Naive thymus-derived CD4-positive, alpha-beta T cell (primary cell): ENCODE measurements at regions of chr1 and their contacts with region 1.

Region 1: GRCh38 chr1:172719694-172720138 is 60.8 kb downstream of the FASLG start:
- DNase-seq: peak in 7 of 9 donors; percentile 29 to 61 (median 48)
- ATAC-seq: peak; percentile 87
- H3K4me3 ChIP-seq: no peak overlapping the region
- H3K4me3 Mint-ChIP-seq: no peak overlapping the region
- H3K27ac ChIP-seq: no peak overlapping the region
- H3K27ac Mint-ChIP-seq: peak overlapping the region in 4 of 9 donors; percentile 0 to 22 (median 9)
- H3K4me1 ChIP-seq: peaks cover 0 to 13% of the 10 kb centered on the region in 2 donors
- H3K4me1 Mint-ChIP-seq: peaks cover 21 to 50% (median 32%) of the 10 kb centered on the region in 7 donors
- H3K27me3 ChIP-seq: no peaks in the 10 kb centered on the region
- H3K27me3 Mint-ChIP-seq: peaks cover 0 to 8% (median 0%) of the 10 kb centered on the region in 5 donors

Region 2: GRCh38 chr1:171344473-171344820 is 1375.3 kb before region 1 on chr1:
- CTCF ChIA-PET with region 1: no interaction called
- POLR2A ChIA-PET with region 1: no interaction called
- intact Hi-C with region 1: no loop called
- DNase-seq: no peak
- ATAC-seq: no peak
- H3K4me3 ChIP-seq: no peak overlapping the region
- H3K4me3 Mint-ChIP-seq: no peak overlapping the region
- H3K27ac ChIP-seq: no peak overlapping the region
- H3K27ac Mint-ChIP-seq: no peak overlapping the region
- H3K4me1 ChIP-seq: no peaks in the 10 kb centered on the region
- H3K4me1 Mint-ChIP-seq: no peaks in the 10 kb centered on the region
- H3K27me3 ChIP-seq: no peaks in the 10 kb centered on the region
- H3K27me3 Mint-ChIP-seq: peaks cover 0 to under 1% (median 0%) of the 10 kb centered on the region in 5 donors

Region 3: GRCh38 chr1:172002725-172003345 is 716.9 kb before region 1 on chr1:
- CTCF ChIA-PET with region 1: no interaction called
- POLR2A ChIA-PET with region 1: no interaction called
- intact Hi-C with region 1: loop called (anchors 5 kb)
- DNase-seq: peak in 7 of 9 donors; percentile 8 to 53 (median 37)
- ATAC-seq: peak; percentile 55
- H3K4me3 ChIP-seq: no peak overlapping the region
- H3K4me3 Mint-ChIP-seq: no peak overlapping the region
- H3K27ac ChIP-seq: no peak overlapping the region
- H3K27ac Mint-ChIP-seq: no peak overlapping the region
- H3K4me1 ChIP-seq: no peaks in the 10 kb centered on the region
- H3K4me1 Mint-ChIP-seq: peaks cover 0 to 8% (median 3%) of the 10 kb centered on the region in 7 donors
- H3K27me3 ChIP-seq: no peaks in the 10 kb centered on the region
- H3K27me3 Mint-ChIP-seq: no peaks in the 10 kb centered on the region

Region 4: DNA sequence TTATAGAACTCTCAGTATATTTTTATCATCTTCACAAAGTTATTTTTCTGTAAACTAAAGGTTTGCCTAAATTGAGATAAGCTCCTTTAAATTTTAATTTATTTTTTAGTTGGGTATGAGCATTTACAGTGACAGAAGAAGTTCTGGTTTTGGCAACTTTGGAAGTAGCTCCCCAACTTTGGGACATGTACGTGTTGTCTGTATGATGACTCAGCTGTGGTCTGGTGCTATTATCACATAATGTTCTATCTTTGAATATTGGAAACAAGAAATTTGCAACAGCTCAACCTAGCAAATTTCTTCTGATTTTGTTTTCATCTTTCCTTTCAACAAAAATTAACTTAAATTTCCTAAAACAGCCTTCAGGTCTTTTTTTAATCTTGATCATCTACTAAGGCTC is 345.9 kb before region 1 on chr1:
- CTCF ChIA-PET with region 1: no interaction called
- POLR2A ChIA-PET with region 1: no interaction called
- intact Hi-C with region 1: no loop called
- DNase-seq: no peak
- ATAC-seq: no peak
- H3K4me3 ChIP-seq: no peak overlapping the region
- H3K4me3 Mint-ChIP-seq: no peak overlapping the region
- H3K27ac ChIP-seq: no peak overlapping the region
- H3K27ac Mint-ChIP-seq: no peak overlapping the region
- H3K4me1 ChIP-seq: no peaks in the 10 kb centered on the region
- H3K4me1 Mint-ChIP-seq: peaks cover 0 to 25% (median 11%) of the 10 kb centered on the region in 7 donors
- H3K27me3 ChIP-seq: no peaks in the 10 kb centered on the region
- H3K27me3 Mint-ChIP-seq: no peaks in the 10 kb centered on the region

Region 5: GRCh38 chr1:172443626-172444453 is 275.9 kb before region 1 on chr1 and contains the start of gene PIGC:
- CTCF ChIA-PET with region 1: interaction called, 3 read pairs
- POLR2A ChIA-PET with region 1: interaction called, 3 read pairs
- intact Hi-C with region 1: loop called in 1 of 2 experiments (anchors 1 kb)
- DNase-seq: peak; percentile 78 to 89 (median 87)
- ATAC-seq: peak; percentile 100
- H3K4me3 ChIP-seq: peak within 1 kb of the TSS; percentile 72
- H3K4me3 Mint-ChIP-seq: peak within 1 kb of the TSS; percentile 87 to 98 (median 94)
- H3K27ac ChIP-seq: peak within 1 kb of the TSS; percentile 83
- H3K27ac Mint-ChIP-seq: peak within 1 kb of the TSS; percentile 91 to 97 (median 93)
- H3K4me1 ChIP-seq: peaks cover 15 to 25% of the 10 kb centered on the region in 2 donors
- H3K4me1 Mint-ChIP-seq: peaks cover 27 to 53% (median 47%) of the 10 kb centered on the region in 7 donors
- H3K27me3 ChIP-seq: no peaks in the 10 kb centered on the region
- H3K27me3 Mint-ChIP-seq: no peaks in the 10 kb centered on the region
- total RNA-seq, gene PIGC: 21.1 to 57.4 (median 25.1) TPM

Region 6: GRCh38 chr1:172582893-172583292 is 136.8 kb before region 1 on chr1:
- CTCF ChIA-PET with region 1: interaction called, 7 read pairs
- POLR2A ChIA-PET with region 1: no interaction called
- intact Hi-C with region 1: loop called in 1 of 2 experiments (anchors 1 kb)
- DNase-seq: no peak
- ATAC-seq: no peak
- H3K4me3 ChIP-seq: no peak overlapping the region
- H3K4me3 Mint-ChIP-seq: no peak overlapping the region
- H3K27ac ChIP-seq: no peak overlapping the region
- H3K27ac Mint-ChIP-seq: peak overlapping the region in 2 of 9 donors; percentile 38 to 43
- H3K4me1 ChIP-seq: no peaks in the 10 kb centered on the region
- H3K4me1 Mint-ChIP-seq: peaks cover 0 to 22% (median 6%) of the 10 kb centered on the region in 7 donors
- H3K27me3 ChIP-seq: no peaks in the 10 kb centered on the region
- H3K27me3 Mint-ChIP-seq: no peaks in the 10 kb centered on the region

Region 7: DNA sequence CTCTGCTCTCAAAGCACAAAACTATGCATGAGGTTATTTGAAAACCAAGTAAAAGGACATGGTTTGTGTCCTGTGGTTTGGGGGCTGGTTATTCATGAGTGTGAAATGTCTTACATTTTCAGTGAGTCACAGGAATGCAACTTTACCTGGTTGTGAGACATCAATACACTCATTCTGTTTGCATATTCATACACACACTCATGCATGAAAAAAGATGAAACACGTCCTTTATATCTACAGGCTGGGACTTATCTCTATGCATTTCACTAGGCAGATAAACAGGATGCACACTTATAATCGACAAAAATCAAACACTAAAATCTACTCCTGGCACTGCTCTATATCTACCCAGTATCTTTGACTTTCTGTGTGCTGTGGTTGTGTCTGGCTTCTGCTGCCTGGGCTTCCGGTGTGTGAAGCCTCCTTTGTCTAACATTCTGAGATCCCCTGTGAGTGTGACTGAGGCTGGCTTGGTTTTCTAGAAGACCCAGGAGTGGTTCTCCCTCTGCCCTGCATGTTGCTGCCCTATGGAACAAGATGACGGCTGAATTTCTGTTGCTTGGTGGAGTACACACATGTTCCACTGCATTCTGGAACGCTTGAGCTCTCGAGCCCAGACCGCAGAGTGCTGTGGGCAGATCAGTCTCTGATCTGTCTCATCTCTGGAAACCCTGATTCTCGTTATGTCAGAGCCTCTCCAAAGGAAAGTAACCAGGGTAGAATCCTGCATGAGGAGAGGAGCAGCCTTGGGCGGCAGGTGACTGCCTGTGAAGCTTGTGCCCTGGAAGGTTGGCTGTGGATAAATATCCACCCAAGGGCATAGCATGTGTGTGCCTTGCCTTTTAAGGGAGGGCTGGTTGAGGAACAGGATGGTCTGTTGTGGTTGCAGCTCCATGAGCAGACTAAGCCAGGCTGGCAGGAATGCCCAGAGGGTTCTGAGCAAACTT is 80.6 kb before region 1 on chr1:
- CTCF ChIA-PET with region 1: interaction called, 13 read pairs
- POLR2A ChIA-PET with region 1: interaction called, 3 read pairs
- intact Hi-C with region 1: loop called (anchors 1 to 2 kb)
- DNase-seq: peak; percentile 12 to 85 (median 79)
- ATAC-seq: peak; percentile 87
- H3K4me3 ChIP-seq: peak overlapping the region; percentile 32
- H3K4me3 Mint-ChIP-seq: peak overlapping the region; percentile 46 to 88 (median 78)
- H3K27ac ChIP-seq: peak overlapping the region; percentile 43
- H3K27ac Mint-ChIP-seq: peak overlapping the region; percentile 88 to 94 (median 91)
- H3K4me1 ChIP-seq: peaks cover 63 to 72% of the 10 kb centered on the region in 2 donors
- H3K4me1 Mint-ChIP-seq: peaks cover 54 to 87% (median 81%) of the 10 kb centered on the region in 7 donors
- H3K27me3 ChIP-seq: no peaks in the 10 kb centered on the region
- H3K27me3 Mint-ChIP-seq: peaks cover 0 to 29% (median 0%) of the 10 kb centered on the region in 5 donors

Region 8: GRCh38 chr1:172671591-172671990 is 48.1 kb before region 1 on chr1:
- CTCF ChIA-PET with region 1: interaction called, 5 read pairs
- POLR2A ChIA-PET with region 1: interaction called, 5 read pairs
- intact Hi-C with region 1: loop called (anchors 2 kb)
- DNase-seq: no peak
- ATAC-seq: no peak
- H3K4me3 ChIP-seq: peak overlapping the region; percentile 34
- H3K4me3 Mint-ChIP-seq: peak overlapping the region in 2 of 10 donors; percentile 3 to 66
- H3K27ac ChIP-seq: no peak overlapping the region
- H3K27ac Mint-ChIP-seq: peak overlapping the region in 2 of 9 donors; percentile 20 to 34
- H3K4me1 ChIP-seq: peaks cover 50 to 60% of the 10 kb centered on the region in 2 donors
- H3K4me1 Mint-ChIP-seq: peaks cover 23 to 82% (median 60%) of the 10 kb centered on the region in 7 donors
- H3K27me3 ChIP-seq: no peaks in the 10 kb centered on the region
- H3K27me3 Mint-ChIP-seq: no peaks in the 10 kb centered on the region

Region 9: DNA sequence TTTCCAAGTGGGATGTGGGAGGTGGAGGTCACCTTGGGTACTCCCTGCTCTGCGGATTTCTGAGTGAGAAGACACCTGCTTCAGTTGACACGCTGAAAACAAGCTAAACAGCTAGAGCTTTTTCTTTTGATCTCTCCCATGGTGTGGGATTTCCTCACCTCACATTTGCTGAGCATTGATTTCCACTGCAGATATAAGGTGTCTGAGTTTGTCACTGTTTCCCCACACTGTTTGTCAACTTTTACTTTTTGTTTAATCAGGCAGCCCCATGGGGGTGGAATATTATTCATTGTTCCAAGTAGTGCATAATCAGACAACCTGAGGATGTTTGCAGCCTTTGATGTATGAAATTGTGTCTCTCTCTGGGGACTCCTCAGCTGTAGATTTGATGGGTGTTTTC is 11.3 kb before region 1 on chr1:
- CTCF ChIA-PET with region 1: interaction called, 9 read pairs
- POLR2A ChIA-PET with region 1: interaction called, 3 read pairs
- intact Hi-C with region 1: loop called (anchors 1 kb)
- DNase-seq: peak in 7 of 9 donors; percentile 43 to 62 (median 53)
- ATAC-seq: peak; percentile 86
- H3K4me3 ChIP-seq: peak overlapping the region; percentile 7
- H3K4me3 Mint-ChIP-seq: peak overlapping the region; percentile 20 to 73 (median 51)
- H3K27ac ChIP-seq: no peak overlapping the region
- H3K27ac Mint-ChIP-seq: peak overlapping the region in 3 of 9 donors; percentile 31 to 71 (median 43)
- H3K4me1 ChIP-seq: peaks cover 35 to 48% of the 10 kb centered on the region in 2 donors
- H3K4me1 Mint-ChIP-seq: peaks cover 10 to 40% (median 27%) of the 10 kb centered on the region in 7 donors
- H3K27me3 ChIP-seq: no peaks in the 10 kb centered on the region
- H3K27me3 Mint-ChIP-seq: peaks cover 0 to 26% (median 0%) of the 10 kb centered on the region in 5 donors